Activated CD4-positive, alpha-beta memory T cell treated with anti-CD3 and anti-CD28 coated beads, Interleukin-2, amount 10 ng/mL, durations not matched to agents 7 days and 5 days (primary cell): ENCODE measurements at regions of chr13 and their contacts with region 1.

Region 1: DNA sequence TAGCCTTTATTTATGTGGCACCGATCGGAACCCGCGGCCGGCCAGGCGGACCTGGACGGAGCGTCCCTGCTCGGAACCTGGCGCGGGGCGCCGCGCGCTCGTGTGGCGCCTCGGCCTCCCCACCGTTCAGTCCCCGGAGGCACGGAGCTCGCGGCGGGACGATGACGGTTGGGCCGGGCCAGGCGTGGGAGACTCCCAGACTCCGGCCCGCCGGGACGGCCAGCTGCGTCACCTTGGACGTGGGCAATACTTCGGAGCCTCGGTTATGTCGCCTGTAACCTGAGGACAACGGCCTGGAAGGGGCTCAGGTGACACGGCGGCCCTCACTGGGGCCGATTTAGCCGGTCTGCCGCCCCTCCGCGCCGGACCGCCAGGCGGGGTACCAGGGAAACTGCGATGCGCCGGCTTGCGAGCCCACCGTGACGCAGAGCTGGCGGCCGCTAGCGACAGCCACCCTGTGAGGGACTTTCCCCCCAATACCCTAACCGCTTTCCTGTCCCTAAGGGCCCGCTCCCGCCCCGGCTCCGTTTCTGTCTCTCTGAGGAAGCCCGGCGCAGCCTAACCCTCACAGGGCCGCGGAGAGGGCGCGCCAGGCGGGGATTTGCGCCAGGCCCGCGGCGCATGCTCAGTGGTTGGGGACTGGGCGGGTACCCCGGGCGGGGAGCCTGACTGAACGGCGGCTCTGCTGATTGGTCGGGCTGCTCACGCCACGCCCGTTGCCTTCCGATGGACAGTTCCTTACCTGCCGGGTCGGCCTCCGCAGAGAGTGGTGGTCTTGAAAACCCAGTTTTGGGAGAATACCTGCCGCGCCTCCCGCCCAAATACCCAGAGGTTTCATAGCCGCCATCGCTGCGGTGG is 109.5 kb upstream of the DOCK9 start:
- DNase-seq: peak; percentile 94
- H3K4me3 Mint-ChIP-seq: peak overlapping the region; percentile 94
- H3K27ac Mint-ChIP-seq: peak overlapping the region; percentile 97
- H3K4me1 Mint-ChIP-seq: peaks cover 33% of the 10 kb centered on the region
- H3K27me3 Mint-ChIP-seq: no peaks in the 10 kb centered on the region

Region 2: GRCh38 chr13:98869408-98870090 is 217.8 kb before region 1 on chr13:
- CTCF ChIA-PET with region 1: interaction called, 13 read pairs
- POLR2A ChIA-PET with region 1: interaction called, 3 read pairs
- DNase-seq: no peak
- H3K4me3 Mint-ChIP-seq: no peak overlapping the region
- H3K27ac Mint-ChIP-seq: no peak overlapping the region
- H3K4me1 Mint-ChIP-seq: peaks cover 21% of the 10 kb centered on the region
- H3K27me3 Mint-ChIP-seq: no peaks in the 10 kb centered on the region

Region 3: DNA sequence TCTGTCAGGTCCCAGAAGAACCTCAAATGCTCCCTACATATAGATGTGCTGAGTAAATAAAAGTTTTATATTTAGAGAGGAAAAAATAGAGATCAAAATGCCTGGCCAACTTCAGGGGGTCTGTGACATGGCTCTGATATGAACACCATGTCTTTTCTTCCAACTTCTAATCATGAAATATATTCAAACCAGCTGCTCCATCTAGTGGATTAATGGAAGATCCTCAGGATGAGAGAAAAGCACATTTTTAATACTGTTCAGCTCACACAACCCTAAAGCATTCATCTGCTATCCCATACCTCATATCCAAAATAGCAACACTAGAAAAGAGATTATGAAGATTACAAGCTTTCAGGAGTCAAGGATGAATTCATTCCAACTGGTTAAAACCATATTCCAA is 53.5 kb before region 1 on chr13:
- CTCF ChIA-PET with region 1: interaction called, 13 read pairs
- POLR2A ChIA-PET with region 1: interaction called, 5 read pairs
- DNase-seq: no peak
- H3K4me3 Mint-ChIP-seq: no peak overlapping the region
- H3K27ac Mint-ChIP-seq: no peak overlapping the region
- H3K4me1 Mint-ChIP-seq: peaks cover 22% of the 10 kb centered on the region
- H3K27me3 Mint-ChIP-seq: no peaks in the 10 kb centered on the region

Region 4: DNA sequence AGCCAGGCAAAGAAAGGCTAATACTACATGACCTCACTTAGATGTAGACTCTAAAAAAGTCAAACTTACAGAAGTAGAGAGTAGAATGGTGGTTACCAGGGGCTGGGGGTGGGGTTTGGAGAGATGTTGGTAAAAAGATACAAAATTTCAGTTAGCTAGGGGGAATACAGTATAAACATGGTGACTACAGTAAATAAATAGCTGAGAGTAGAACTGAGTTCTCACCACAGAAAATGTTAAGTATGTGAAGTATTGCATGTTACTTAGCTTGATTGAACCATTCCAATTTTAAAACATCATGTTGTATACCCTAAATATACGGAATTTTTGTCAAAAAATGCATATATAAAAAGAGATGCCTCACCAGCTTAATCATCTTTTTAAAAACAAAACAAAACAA is 41.9 kb before region 1 on chr13:
- CTCF ChIA-PET with region 1: interaction called, 10 read pairs
- POLR2A ChIA-PET with region 1: interaction called, 61 read pairs
- DNase-seq: no peak
- H3K4me3 Mint-ChIP-seq: peak overlapping the region; percentile 68
- H3K27ac Mint-ChIP-seq: peak overlapping the region; percentile 97
- H3K4me1 Mint-ChIP-seq: peaks cover 94% of the 10 kb centered on the region
- H3K27me3 Mint-ChIP-seq: no peaks in the 10 kb centered on the region

Region 5: GRCh38 chr13:99057310-99057975 is 29.9 kb before region 1 on chr13:
- CTCF ChIA-PET with region 1: no interaction called
- POLR2A ChIA-PET with region 1: interaction called, 61 read pairs
- DNase-seq: no peak
- H3K4me3 Mint-ChIP-seq: no peak overlapping the region
- H3K27ac Mint-ChIP-seq: no peak overlapping the region
- H3K4me1 Mint-ChIP-seq: peaks cover 45% of the 10 kb centered on the region
- H3K27me3 Mint-ChIP-seq: no peaks in the 10 kb centered on the region

Region 6: GRCh38 chr13:99067160-99067985 is 20.0 kb before region 1 on chr13:
- CTCF ChIA-PET with region 1: no interaction called
- POLR2A ChIA-PET with region 1: interaction called, 12 read pairs
- DNase-seq: no peak
- H3K4me3 Mint-ChIP-seq: no peak overlapping the region
- H3K27ac Mint-ChIP-seq: peak overlapping the region; percentile 10
- H3K4me1 Mint-ChIP-seq: peaks cover 59% of the 10 kb centered on the region
- H3K27me3 Mint-ChIP-seq: no peaks in the 10 kb centered on the region

Region 7: DNA sequence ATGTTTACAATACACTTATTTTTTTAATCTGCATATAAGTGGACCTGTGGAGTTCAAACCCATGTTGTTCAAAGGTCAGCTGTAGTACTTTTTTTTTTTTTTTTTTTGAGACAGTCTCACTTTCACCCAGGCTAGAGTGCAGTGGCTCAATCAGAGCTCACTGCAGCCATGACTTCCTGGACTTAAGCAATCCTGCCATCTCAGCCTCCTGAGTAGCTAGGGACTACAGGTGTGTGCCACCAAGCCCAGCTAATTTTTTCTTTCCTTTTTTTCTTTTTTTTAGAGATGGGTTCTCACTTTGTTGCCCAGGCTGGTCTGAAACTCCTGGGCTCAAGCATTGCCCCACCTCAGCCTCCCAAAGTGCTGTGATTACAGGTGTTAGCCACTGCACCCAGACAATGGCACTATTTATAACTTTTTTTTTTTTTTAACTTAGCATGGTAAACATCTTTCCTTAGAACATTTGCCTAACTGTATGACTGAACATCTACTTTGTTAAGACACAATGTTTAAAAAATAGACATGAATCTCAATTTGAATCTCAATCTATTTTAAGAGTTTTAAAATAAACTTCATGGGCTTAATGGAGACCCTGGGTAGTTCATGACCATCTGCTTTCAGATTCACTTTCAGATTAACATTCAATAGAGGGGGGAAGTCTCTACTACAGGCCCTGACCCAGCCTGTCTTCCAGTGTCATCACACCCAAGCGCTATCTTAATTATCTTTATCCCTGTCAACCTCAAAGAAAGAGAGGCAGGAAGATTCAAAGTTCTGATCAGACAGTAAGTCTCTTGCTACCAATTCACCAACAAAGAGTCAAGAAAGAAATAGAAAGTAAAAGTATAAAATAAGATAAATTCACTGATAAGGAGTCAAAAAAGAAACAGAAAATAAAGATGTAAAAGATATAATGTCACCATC is 11.8 kb before region 1 on chr13:
- CTCF ChIA-PET with region 1: no interaction called
- POLR2A ChIA-PET with region 1: interaction called, 11 read pairs
- DNase-seq: no peak
- H3K4me3 Mint-ChIP-seq: peak overlapping the region; percentile 15
- H3K27ac Mint-ChIP-seq: peak overlapping the region; percentile 82
- H3K4me1 Mint-ChIP-seq: peaks cover 65% of the 10 kb centered on the region
- H3K27me3 Mint-ChIP-seq: no peaks in the 10 kb centered on the region